ENCODE measurements at regions of chr19 and their contacts with region 1.

Region 1: GRCh38 chr19:56140583-56141416 is at the start of gene ZNF444:
- DNase-seq: peak; percentile 100
- H3K4me3 ChIP-seq: peak within 1 kb of the TSS; percentile 57 to 73 (median 70)
- H3K27ac ChIP-seq: peak within 1 kb of the TSS; percentile 61
- H3K4me1 ChIP-seq: peaks cover 10% of the 10 kb centered on the region
- H3K27me3 ChIP-seq: no peaks in the 10 kb centered on the region
- CTCF ChIP-seq: no peak
- POLR2A ChIP-seq: peak; percentile 59
- total RNA-seq, gene ZNF444: 37.1 and 37.2 TPM in 2 replicates

Region 2: DNA sequence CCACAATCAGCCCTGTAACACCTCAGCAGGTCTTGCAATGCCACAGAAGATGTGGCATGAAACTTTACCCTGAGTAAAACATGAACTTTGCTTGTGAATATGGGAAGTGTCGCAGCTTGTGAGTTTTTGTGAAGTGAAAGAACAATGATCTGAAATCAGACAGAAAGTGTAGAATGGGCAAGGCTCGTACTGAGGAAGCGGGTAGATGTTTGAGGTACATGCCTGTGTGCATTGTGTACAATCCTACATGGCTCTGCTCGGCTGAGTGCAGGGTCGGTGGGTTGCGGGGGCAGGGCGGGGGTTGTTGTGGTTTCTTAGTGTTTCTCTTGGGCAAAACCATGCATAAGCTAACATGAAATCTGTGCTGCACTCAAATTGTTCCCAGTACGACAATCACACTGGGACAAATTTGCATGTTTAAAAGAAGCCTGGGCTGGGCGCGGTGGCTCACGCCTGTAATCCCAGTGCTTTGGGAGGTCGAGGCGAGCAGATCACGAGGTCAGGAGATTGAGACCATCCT is 209.7 kb before region 1 on chr19:
- CTCF ChIA-PET with region 1: no interaction called
- POLR2A ChIA-PET with region 1: no interaction called
- dilution Hi-C with region 1: no loop called
- intact Hi-C with region 1: no loop called
- DNase-seq: no peak
- H3K4me3 ChIP-seq: no peak overlapping the region
- H3K27ac ChIP-seq: no peak overlapping the region
- H3K4me1 ChIP-seq: no peaks in the 10 kb centered on the region
- H3K27me3 ChIP-seq: no peaks in the 10 kb centered on the region
- CTCF ChIP-seq: no peak
- POLR2A ChIP-seq: no peak

Region 3: DNA sequence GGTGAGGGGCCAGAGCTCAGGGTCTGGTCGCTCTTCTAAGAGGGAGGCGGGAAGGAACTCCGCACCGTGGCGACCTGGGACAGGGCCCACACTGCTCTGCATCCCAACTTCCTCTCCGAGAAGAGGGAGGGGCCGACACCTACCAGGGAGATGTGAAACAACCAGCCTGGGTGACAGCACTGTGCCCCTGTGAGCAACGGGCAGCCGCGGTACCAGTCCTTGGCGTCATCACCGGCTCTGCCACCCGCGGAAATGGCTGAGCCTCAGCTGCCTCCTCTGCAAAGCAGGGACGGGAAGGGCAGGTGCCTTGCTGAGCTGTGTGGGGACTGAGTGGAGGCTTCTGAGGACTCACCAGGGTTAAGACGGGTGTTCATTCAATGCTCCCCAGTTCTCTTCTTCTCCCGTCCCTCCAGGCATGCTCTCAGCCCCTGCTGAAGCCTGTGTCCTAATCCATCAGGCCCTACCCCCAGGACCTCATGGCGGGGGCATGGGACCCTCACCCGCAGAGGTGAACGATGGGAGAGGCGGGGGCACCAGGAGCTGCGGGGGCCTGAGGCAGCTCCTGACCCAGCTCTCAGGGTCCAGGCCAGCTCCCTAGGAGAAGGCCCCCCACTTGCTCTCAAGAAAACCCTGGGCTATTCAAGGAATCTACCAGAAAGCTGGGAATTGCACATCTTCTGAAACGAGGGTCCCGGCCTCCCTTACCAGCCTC is 29.0 kb before region 1 on chr19:
- CTCF ChIA-PET with region 1: no interaction called
- POLR2A ChIA-PET with region 1: no interaction called
- dilution Hi-C with region 1: no loop called
- intact Hi-C with region 1: loop called (anchors 2 kb)
- DNase-seq: no peak
- H3K4me3 ChIP-seq: no peak overlapping the region
- H3K27ac ChIP-seq: no peak overlapping the region
- H3K4me1 ChIP-seq: peaks cover 32% of the 10 kb centered on the region
- H3K27me3 ChIP-seq: no peaks in the 10 kb centered on the region
- CTCF ChIP-seq: no peak
- POLR2A ChIP-seq: no peak

Region 4: GRCh38 chr19:56155124-56155687 is 14.4 kb after region 1 on chr19:
- CTCF ChIA-PET with region 1: interaction called, 5 read pairs
- POLR2A ChIA-PET with region 1: interaction called, 3 read pairs
- dilution Hi-C with region 1: no loop called
- intact Hi-C with region 1: loop called (anchors 1 kb)
- DNase-seq: no peak
- H3K4me3 ChIP-seq: no peak overlapping the region
- H3K27ac ChIP-seq: no peak overlapping the region
- H3K4me1 ChIP-seq: peaks cover 10% of the 10 kb centered on the region
- H3K27me3 ChIP-seq: no peaks in the 10 kb centered on the region
- CTCF ChIP-seq: peak; percentile 24 to 40
- POLR2A ChIP-seq: no peak

Region 5: DNA sequence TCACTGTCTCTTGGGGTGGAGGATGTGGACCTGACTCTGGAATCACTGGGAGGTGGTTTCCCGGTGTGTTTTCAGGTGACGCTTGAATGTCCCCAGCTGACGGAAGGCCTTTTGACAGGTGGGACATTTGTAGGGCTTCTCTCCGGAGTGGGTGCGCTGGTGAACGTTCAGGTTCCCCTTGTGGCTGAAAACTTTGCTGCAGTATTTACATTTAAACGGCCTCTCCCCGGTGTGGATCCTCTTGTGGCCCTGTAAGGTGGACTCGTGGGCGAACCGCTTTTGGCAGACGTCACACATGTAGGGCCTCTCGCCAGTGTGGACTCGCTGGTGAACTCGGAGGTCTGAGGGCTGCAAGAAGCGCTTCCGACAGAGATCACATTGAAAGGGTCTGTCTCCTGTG is 49.0 kb after region 1 on chr19:
- CTCF ChIA-PET with region 1: no interaction called
- POLR2A ChIA-PET with region 1: no interaction called
- dilution Hi-C with region 1: no loop called
- intact Hi-C with region 1: no loop called
- DNase-seq: no peak
- H3K4me3 ChIP-seq: no peak overlapping the region
- H3K27ac ChIP-seq: no peak overlapping the region
- H3K4me1 ChIP-seq: no peaks in the 10 kb centered on the region
- H3K27me3 ChIP-seq: no peaks in the 10 kb centered on the region
- CTCF ChIP-seq: no peak
- POLR2A ChIP-seq: no peak